PC-3 (cell line): ENCODE measurements at regions of chr11 and their contacts with region 1.

Region 1: DNA sequence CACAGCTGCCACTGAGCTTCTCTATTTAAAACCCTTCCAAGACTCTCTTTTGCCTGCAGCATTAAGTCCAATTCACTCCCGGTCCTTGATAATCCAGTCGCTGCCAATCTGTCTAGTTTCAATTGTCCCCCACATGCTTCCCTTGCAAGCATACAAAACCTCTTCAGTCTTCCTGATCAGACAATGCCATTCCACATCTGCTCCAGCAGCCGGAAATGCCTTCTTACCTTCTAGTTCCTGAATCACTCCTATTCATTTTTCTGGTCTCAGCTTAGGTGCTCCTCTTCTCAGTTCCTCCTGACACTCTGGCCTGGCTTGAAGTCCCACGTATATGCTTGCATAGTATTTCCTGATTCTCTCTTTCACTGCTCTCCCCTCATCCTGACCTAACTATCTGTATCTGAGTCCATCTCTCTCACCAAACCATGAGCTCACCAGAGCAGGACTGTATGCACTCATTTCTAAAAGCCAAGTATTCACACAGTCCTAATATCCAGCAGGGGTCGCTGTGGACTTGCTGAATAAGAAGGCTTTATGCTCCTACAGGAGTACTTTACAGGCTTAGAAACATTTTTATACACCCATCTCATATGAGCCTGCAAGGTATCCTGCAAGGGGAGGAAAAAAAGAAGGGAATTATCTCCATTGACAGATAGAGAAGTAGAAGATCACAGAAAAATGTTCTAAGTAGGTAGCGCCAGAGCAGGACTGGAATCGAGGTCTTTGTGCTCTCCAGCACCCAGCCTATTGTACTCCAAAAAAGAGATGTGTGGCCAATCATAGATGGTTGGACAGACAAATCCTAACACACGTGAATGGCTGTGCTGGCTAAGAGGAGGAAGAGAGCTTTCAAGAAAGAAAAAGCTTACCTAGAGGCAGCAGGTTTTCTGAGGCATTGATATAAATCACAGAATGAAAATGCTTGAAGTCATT is 19.2 kb downstream of the XRRA1 start:
- DNase-seq: peak; percentile 95
- ATAC-seq: peak; percentile 73
- H3K4me3 ChIP-seq: no peak overlapping the region
- H3K27ac ChIP-seq: no peak overlapping the region
- H3K4me1 ChIP-seq: peaks cover 51% of the 10 kb centered on the region
- H3K27me3 ChIP-seq: no peaks in the 10 kb centered on the region
- CTCF ChIP-seq: peak; percentile 99

Region 2: GRCh38 chr11:74754507-74755255 is 175.0 kb before region 1 on chr11:
- CTCF ChIA-PET with region 1: no interaction called
- POLR2A ChIA-PET with region 1: no interaction called
- intact Hi-C with region 1: loop called (anchors 10 kb)
- DNase-seq: peak; percentile 96
- ATAC-seq: peak; percentile 92
- H3K4me3 ChIP-seq: peak overlapping the region; percentile 59
- H3K27ac ChIP-seq: peak overlapping the region; percentile 80
- H3K4me1 ChIP-seq: peaks cover 42% of the 10 kb centered on the region
- H3K27me3 ChIP-seq: no peaks in the 10 kb centered on the region
- CTCF ChIP-seq: no peak

Region 3: GRCh38 chr11:74988541-74989260 is 59.0 kb after region 1 on chr11 and contains the start of gene NEU3:
- CTCF ChIA-PET with region 1: no interaction called
- POLR2A ChIA-PET with region 1: no interaction called
- intact Hi-C with region 1: loop called (anchors 5 kb)
- DNase-seq: peak; percentile 88
- ATAC-seq: peak; percentile 93
- H3K4me3 ChIP-seq: peak within 1 kb of the TSS; percentile 94
- H3K27ac ChIP-seq: peak within 1 kb of the TSS; percentile 35
- H3K4me1 ChIP-seq: peaks cover 10% of the 10 kb centered on the region
- H3K27me3 ChIP-seq: no peaks in the 10 kb centered on the region
- CTCF ChIP-seq: no peak
- total RNA-seq, gene NEU3: 15.7 and 16.1 TPM in 2 replicates

Region 4: GRCh38 chr11:75031771-75032549 is 102.3 kb after region 1 on chr11:
- CTCF ChIA-PET with region 1: interaction called, 3 read pairs
- POLR2A ChIA-PET with region 1: no interaction called
- intact Hi-C with region 1: loop called (anchors 1 kb)
- DNase-seq: peak; percentile 84
- ATAC-seq: peak; percentile 84
- H3K4me3 ChIP-seq: no peak overlapping the region
- H3K27ac ChIP-seq: peak overlapping the region; percentile 37
- H3K4me1 ChIP-seq: peaks cover 25% of the 10 kb centered on the region
- H3K27me3 ChIP-seq: no peaks in the 10 kb centered on the region
- CTCF ChIP-seq: peak; percentile 91

Region 5: GRCh38 chr11:75204685-75205563 is 275.2 kb after region 1 on chr11:
- CTCF ChIA-PET with region 1: interaction called, 13 read pairs
- POLR2A ChIA-PET with region 1: no interaction called
- intact Hi-C with region 1: loop called (anchors 1 kb)
- DNase-seq: peak; percentile 91
- ATAC-seq: peak; percentile 100
- H3K4me3 ChIP-seq: no peak overlapping the region
- H3K27ac ChIP-seq: no peak overlapping the region
- H3K4me1 ChIP-seq: no peaks in the 10 kb centered on the region
- H3K27me3 ChIP-seq: peaks cover 44% of the 10 kb centered on the region
- CTCF ChIP-seq: peak; percentile 98

Region 6: GRCh38 chr11:75248690-75249268 is 319.1 kb after region 1 on chr11:
- CTCF ChIA-PET with region 1: interaction called, 4 read pairs
- POLR2A ChIA-PET with region 1: no interaction called
- intact Hi-C with region 1: loop called (anchors 1 kb)
- DNase-seq: peak; percentile 97
- ATAC-seq: peak; percentile 93
- H3K4me3 ChIP-seq: no peak overlapping the region
- H3K27ac ChIP-seq: no peak overlapping the region
- H3K4me1 ChIP-seq: no peaks in the 10 kb centered on the region
- H3K27me3 ChIP-seq: peaks cover 22% of the 10 kb centered on the region
- CTCF ChIP-seq: peak; percentile 100